GM12878 (cell line): ENCODE measurements at regions of chr1 and their contacts with region 1.

Region 1: GRCh38 chr1:9110669-9111356 is 18.1 kb downstream of the GPR157 start:
- DNase-seq: no peak
- ATAC-seq: peak; percentile 94
- H3K4me3 ChIP-seq: no peak overlapping the region
- H3K27ac ChIP-seq: no peak overlapping the region
- H3K4me1 ChIP-seq: peaks cover 19% of the 10 kb centered on the region
- H3K27me3 ChIP-seq: no peaks in the 10 kb centered on the region
- CTCF ChIP-seq: peak; percentile 87 to 93 (median 91)
- EP300 ChIP-seq: no peak
- POLR2A ChIP-seq: no peak
- RAD21 ChIP-seq: peak; percentile 98

Region 2: GRCh38 chr1:9052272-9053049 is 58.4 kb before region 1 on chr1:
- CTCF ChIA-PET with region 1: no interaction called
- POLR2A ChIA-PET with region 1: no interaction called
- RAD21 ChIA-PET with region 1: no interaction called
- SMC1A ChIA-PET with region 1: no interaction called
- in situ Hi-C with region 1: no loop called
- intact Hi-C with region 1: no loop called
- DNase-seq: no peak
- ATAC-seq: no peak
- H3K4me3 ChIP-seq: no peak overlapping the region
- H3K27ac ChIP-seq: no peak overlapping the region
- H3K4me1 ChIP-seq: no peaks in the 10 kb centered on the region
- H3K27me3 ChIP-seq: no peaks in the 10 kb centered on the region
- CTCF ChIP-seq: no peak
- EP300 ChIP-seq: no peak
- POLR2A ChIP-seq: no peak
- RAD21 ChIP-seq: no peak

Region 3: DNA sequence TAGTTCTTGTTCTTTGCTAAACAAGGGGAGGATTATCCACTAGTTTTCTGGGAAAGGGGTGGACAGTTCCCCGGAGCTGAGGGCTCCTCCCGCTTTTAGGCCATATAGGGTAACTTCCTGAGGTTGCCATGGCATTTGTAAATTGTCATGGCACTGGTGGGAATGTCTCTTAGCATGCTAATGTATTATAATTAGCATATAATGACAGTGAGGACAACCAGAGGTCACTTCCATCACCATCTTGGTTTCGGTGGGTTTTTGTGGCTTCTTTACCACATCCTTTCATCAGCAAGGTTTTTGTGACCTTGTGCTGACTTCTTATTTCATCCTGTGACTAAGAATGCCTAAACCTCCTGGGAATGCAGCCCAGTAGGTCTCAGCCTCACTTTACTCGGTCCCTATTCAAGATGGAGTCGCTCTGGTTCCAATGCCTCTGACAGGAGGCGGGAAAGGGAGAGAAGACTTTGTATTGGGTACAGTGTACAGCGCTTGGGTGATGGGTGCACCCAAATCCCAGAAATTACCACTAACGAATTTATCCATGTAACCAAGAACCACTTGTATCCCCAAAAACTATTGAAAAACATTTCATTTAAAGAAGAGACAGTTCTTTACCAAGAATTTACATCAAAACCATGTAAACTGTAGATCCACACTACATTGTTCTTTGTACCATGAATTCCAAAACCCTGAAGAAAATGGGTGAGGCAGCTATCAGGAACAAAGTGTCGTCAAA is 32.6 kb before region 1 on chr1:
- CTCF ChIA-PET with region 1: interaction called, 4 read pairs
- POLR2A ChIA-PET with region 1: no interaction called
- RAD21 ChIA-PET with region 1: interaction called, 3 read pairs
- SMC1A ChIA-PET with region 1: interaction called, 11 read pairs
- in situ Hi-C with region 1: no loop called
- intact Hi-C with region 1: no loop called
- DNase-seq: peak; percentile 95
- ATAC-seq: peak; percentile 49
- H3K4me3 ChIP-seq: no peak overlapping the region
- H3K27ac ChIP-seq: peak overlapping the region; percentile 45
- H3K4me1 ChIP-seq: peaks cover 55% of the 10 kb centered on the region
- H3K27me3 ChIP-seq: no peaks in the 10 kb centered on the region
- CTCF ChIP-seq: no peak
- EP300 ChIP-seq: peak; percentile 83 to 94; a peak in 3 of 4 replicates
- POLR2A ChIP-seq: no peak
- RAD21 ChIP-seq: no peak

Region 4: GRCh38 chr1:9135073-9135836 is 24.4 kb after region 1 on chr1:
- CTCF ChIA-PET with region 1: interaction called, 13 read pairs
- POLR2A ChIA-PET with region 1: interaction called, 4 read pairs
- RAD21 ChIA-PET with region 1: interaction called, 14 read pairs
- SMC1A ChIA-PET with region 1: interaction called, 8 read pairs
- in situ Hi-C with region 1: no loop called
- intact Hi-C with region 1: no loop called
- DNase-seq: peak; percentile 67
- ATAC-seq: peak; percentile 88
- H3K4me3 ChIP-seq: 0 out of 2 replicates have a peak overlapping the region, but pooled peaks have one; percentile 5
- H3K27ac ChIP-seq: 0 out of 2 replicates have a peak overlapping the region, but pooled peaks have one; percentile 17
- H3K4me1 ChIP-seq: peaks cover 28% of the 10 kb centered on the region
- H3K27me3 ChIP-seq: no peaks in the 10 kb centered on the region
- CTCF ChIP-seq: no peak
- EP300 ChIP-seq: no peak; a peak in 1 of 4 replicates
- POLR2A ChIP-seq: no peak
- RAD21 ChIP-seq: no peak

Region 5: DNA sequence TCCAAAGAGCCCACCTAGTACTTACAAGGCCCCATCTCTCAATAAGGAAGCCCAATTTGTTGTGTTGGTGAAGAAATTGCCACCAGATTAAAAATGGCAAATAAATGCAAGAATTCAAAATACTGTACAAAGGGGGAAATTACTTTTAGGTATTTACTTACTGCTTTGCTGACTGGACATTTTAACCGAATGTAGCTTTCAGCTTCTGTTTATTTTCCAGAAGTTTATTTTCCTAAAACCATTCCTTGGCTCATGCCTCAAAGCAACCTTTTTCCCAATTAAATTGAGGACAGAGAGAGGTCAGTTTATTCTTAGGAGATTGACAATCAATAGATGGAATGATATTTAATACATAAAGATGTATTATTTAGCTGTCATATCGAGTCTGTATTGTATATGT is 76.2 kb after region 1 on chr1:
- CTCF ChIA-PET with region 1: interaction called, 10 read pairs
- POLR2A ChIA-PET with region 1: no interaction called
- RAD21 ChIA-PET with region 1: interaction called, 10 read pairs
- SMC1A ChIA-PET with region 1: interaction called, 6 read pairs
- in situ Hi-C with region 1: no loop called
- intact Hi-C with region 1: no loop called
- DNase-seq: no peak
- ATAC-seq: no peak
- H3K4me3 ChIP-seq: no peak overlapping the region
- H3K27ac ChIP-seq: no peak overlapping the region
- H3K4me1 ChIP-seq: peaks cover 9% of the 10 kb centered on the region
- H3K27me3 ChIP-seq: no peaks in the 10 kb centered on the region
- CTCF ChIP-seq: no peak
- EP300 ChIP-seq: no peak
- POLR2A ChIP-seq: no peak
- RAD21 ChIP-seq: no peak

Region 6: GRCh38 chr1:9239622-9240401 is 129.0 kb after region 1 on chr1:
- CTCF ChIA-PET with region 1: no interaction called
- POLR2A ChIA-PET with region 1: interaction called, 4 read pairs
- RAD21 ChIA-PET with region 1: interaction called, 3 read pairs
- SMC1A ChIA-PET with region 1: interaction called, 3 read pairs
- in situ Hi-C with region 1: no loop called
- intact Hi-C with region 1: loop called (anchors 5 kb)
- DNase-seq: no peak
- ATAC-seq: peak; percentile 86
- H3K4me3 ChIP-seq: no peak overlapping the region
- H3K27ac ChIP-seq: peak overlapping the region; percentile 42
- H3K4me1 ChIP-seq: peaks cover 18% of the 10 kb centered on the region
- H3K27me3 ChIP-seq: no peaks in the 10 kb centered on the region
- CTCF ChIP-seq: no peak
- EP300 ChIP-seq: no peak
- POLR2A ChIP-seq: no peak
- RAD21 ChIP-seq: no peak

Region 7: GRCh38 chr1:9388335-9389180 is 277.7 kb after region 1 on chr1:
- CTCF ChIA-PET with region 1: no interaction called
- POLR2A ChIA-PET with region 1: no interaction called
- RAD21 ChIA-PET with region 1: no interaction called
- SMC1A ChIA-PET with region 1: no interaction called
- in situ Hi-C with region 1: no loop called
- intact Hi-C with region 1: no loop called
- DNase-seq: no peak
- ATAC-seq: peak; percentile 23; the same call in 1 of the 3 replicates
- H3K4me3 ChIP-seq: no peak overlapping the region
- H3K27ac ChIP-seq: no peak overlapping the region
- H3K4me1 ChIP-seq: peaks cover 4% of the 10 kb centered on the region; the same call in 1 of the 2 replicates
- H3K27me3 ChIP-seq: no peaks in the 10 kb centered on the region; a peak in 1 of 4 replicates
- CTCF ChIP-seq: no peak
- EP300 ChIP-seq: no peak
- POLR2A ChIP-seq: no peak
- RAD21 ChIP-seq: no peak

Region 8: GRCh38 chr1:9494929-9495758 is 384.3 kb after region 1 on chr1:
- CTCF ChIA-PET with region 1: interaction called, 6 read pairs
- POLR2A ChIA-PET with region 1: no interaction called
- RAD21 ChIA-PET with region 1: interaction called, 4 read pairs
- SMC1A ChIA-PET with region 1: no interaction called
- in situ Hi-C with region 1: no loop called
- intact Hi-C with region 1: loop called (anchors 1 kb)
- DNase-seq: no peak
- ATAC-seq: peak; percentile 92
- H3K4me3 ChIP-seq: peak overlapping the region; percentile 5; the same call in 1 of the 2 replicates
- H3K27ac ChIP-seq: no peak overlapping the region
- H3K4me1 ChIP-seq: peaks cover 10% of the 10 kb centered on the region; the same call in 1 of the 2 replicates
- H3K27me3 ChIP-seq: no peaks in the 10 kb centered on the region
- CTCF ChIP-seq: peak; percentile 86 to 96 (median 88)
- EP300 ChIP-seq: no peak
- POLR2A ChIP-seq: peak; percentile 35; the same call in 1 of the 2 replicates
- RAD21 ChIP-seq: peak; percentile 73